ENCODE measurements at regions of chr22 and their contacts with region 1.

Region 1: DNA sequence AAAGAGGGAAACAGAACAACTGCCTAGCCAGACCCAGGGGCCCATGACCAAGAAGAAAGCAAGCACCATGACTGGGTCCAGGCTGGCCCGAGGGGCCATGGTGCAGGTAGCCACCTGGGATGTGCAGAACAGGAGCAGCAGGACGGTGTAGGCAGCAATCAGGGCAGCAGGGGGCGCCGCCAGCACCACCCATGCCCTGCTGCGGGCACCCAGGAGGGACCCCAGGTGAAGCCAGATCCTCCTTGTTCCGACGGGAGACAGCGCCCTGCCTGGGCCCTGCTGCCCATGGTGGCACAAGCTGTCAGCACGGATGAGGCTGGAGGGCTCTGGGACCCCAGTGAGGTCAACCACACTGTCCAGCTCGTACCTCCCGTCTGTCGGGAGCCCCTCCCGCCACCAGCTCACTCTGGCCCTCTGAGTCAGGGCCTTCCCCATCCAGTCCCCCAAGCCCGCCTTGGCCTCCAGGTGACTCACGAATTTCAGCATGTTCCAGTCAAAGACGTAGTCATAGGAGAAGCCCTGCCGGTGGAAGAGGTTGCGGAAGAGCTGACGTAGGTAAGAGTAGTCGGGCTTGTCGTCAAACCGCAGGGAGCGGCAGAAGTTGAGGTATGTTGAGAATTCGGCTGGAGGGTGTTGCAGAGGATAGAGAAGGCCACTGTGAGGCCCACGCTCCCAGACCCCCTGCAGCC is 18.8 kb downstream of the CSNK1E start:
- DNase-seq: peak; percentile 97 to 100
- H3K4me3 ChIP-seq: peak overlapping the region; percentile 27; the same call in 1 of the 2 replicates
- H3K27ac ChIP-seq: peak overlapping the region; percentile 97
- H3K4me1 ChIP-seq: peaks cover 77% of the 10 kb centered on the region
- H3K27me3 ChIP-seq: no peaks in the 10 kb centered on the region
- CTCF ChIP-seq: peak; percentile 92

Region 2: GRCh38 chr22:37832022-37832857 is 466.2 kb before region 1 on chr22:
- CTCF ChIA-PET with region 1: no interaction called
- POLR2A ChIA-PET with region 1: no interaction called
- intact Hi-C with region 1: no loop called
- DNase-seq: no peak
- H3K4me3 ChIP-seq: no peak overlapping the region
- H3K27ac ChIP-seq: no peak overlapping the region
- H3K4me1 ChIP-seq: no peaks in the 10 kb centered on the region
- H3K27me3 ChIP-seq: no peaks in the 10 kb centered on the region
- CTCF ChIP-seq: no peak

Region 3: DNA sequence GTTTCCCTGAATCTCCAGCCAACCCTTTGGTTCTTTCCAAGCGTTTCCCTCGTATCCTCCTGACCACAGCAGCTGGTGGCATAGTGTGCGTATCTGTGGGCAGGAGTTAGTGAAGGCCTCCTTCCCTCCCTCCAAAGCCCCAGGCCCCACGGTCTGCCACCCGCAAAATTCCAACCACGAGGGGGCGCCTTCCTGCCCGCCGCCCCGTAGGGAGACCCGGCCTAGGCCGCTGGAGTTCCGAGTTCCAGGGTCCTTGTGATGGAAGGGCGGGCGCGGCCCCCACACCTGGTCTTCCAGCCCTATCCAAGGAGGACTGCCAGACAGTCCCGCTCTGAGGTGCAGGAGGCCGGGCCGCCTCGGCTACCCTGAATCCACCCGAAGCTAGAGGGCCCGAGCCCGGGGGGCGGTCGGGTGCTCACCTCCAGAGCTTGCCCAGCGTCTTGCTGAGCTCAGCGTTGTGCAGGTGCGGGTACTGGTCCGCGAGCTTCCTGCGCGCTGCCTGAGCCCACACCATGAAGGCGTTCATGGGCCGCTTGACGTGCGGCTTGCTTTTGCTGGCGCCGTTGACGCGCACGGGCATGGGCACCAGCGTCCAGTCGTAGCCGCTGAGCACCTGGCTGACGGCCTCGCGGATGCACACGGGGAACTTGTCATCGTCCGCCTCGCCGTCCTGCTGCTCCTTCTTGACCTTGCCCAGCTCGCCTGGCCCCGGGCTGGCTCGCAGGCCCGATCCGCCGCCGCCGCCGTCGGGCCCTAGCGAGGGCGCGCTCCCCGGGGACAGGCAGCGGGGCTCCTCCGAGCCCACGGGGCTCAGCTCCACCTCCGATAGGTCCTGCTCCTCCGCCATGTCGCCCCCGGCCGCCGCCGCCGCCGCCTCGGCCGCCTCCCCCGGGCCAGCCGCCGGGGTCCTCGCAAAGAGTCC is 315.3 kb before region 1 on chr22:
- CTCF ChIA-PET with region 1: no interaction called
- POLR2A ChIA-PET with region 1: no interaction called
- intact Hi-C with region 1: no loop called
- DNase-seq: no peak
- H3K4me3 ChIP-seq: no peak overlapping the region
- H3K27ac ChIP-seq: no peak overlapping the region
- H3K4me1 ChIP-seq: no peaks in the 10 kb centered on the region
- H3K27me3 ChIP-seq: no peaks in the 10 kb centered on the region
- CTCF ChIP-seq: no peak

Region 4: DNA sequence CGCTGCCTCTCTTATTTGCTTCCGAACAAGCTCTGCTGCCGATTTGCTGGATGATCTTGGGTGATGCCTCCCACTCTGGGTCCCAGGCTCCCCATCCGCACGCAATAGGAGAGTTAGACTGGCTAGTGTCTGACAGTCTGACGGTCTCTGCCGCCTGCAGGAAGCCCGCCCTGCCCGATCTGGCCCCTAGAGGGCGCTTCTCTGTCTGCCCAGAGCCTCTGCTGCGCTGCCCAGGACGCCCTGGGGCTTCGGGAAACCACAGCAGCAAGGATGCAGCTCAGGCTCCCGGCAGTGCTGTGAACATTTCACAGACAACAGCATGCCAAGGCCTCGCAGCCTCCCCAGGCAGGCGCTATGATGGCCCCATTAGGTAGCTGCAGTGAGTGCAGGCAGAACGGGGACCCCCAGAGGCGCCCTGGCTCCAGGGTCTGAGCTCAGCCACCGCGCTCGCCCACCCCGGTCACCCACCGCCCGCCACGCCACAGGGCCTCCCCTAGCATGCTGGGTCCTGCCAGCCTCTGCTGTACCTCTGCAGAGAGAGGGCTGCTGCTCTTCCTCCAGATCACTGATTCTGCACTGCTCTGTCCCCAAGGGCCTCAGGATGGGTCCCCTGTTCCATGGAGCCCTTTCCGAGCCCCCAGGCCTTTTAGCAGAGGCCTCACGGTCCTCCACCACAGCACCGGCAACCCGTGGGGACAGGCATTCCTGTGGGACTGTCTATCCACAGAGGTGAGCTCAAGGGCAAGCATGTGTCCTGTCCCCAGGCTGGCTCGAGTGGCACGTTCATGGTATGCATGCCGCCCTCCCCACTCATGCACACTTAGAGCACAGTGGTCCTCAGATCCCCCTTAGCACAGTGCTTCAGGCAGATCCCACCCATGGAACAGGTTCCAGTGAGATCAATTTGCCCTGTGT is 183.7 kb before region 1 on chr22:
- CTCF ChIA-PET with region 1: no interaction called
- POLR2A ChIA-PET with region 1: no interaction called
- intact Hi-C with region 1: loop called (anchors 5 kb)
- DNase-seq: peak; percentile 69 to 90
- H3K4me3 ChIP-seq: no peak overlapping the region
- H3K27ac ChIP-seq: no peak overlapping the region
- H3K4me1 ChIP-seq: peaks cover 14% of the 10 kb centered on the region
- H3K27me3 ChIP-seq: no peaks in the 10 kb centered on the region
- CTCF ChIP-seq: peak; percentile 99

Region 5: DNA sequence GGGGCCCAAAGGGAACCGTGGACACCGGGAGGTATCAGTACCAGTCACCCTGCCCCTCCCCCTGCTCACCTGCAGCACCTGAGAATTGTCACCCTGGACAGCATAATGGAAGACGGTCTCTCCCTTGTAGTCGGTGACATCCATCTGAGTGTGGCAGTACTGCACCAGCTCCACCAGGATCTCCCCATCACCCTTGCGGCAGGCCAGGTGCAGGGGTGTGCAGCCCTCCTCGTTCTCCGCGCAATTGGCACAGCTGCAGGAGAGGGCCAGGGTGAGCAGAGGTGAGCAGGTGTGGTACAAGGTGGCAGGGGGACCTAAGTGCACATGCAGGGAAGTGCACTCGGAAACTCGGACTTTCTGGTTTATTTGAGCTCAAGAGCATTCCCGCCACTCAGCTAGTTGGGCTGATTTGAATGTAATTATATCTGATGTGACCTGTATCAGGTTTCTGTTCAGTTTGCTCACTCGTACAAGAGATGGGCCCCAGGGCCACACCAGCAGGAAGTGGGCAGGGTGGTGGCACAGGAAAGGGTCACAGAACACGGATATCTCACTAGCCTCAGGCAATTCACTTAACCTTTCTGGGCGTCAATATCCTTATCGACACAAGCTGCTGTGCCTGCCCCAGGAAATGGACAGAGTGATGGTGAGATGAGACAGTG is 155.3 kb before region 1 on chr22:
- CTCF ChIA-PET with region 1: no interaction called
- POLR2A ChIA-PET with region 1: no interaction called
- intact Hi-C with region 1: loop called (anchors 10 kb)
- DNase-seq: peak; percentile 88 to 98
- H3K4me3 ChIP-seq: no peak overlapping the region
- H3K27ac ChIP-seq: peak overlapping the region; percentile 82
- H3K4me1 ChIP-seq: peaks cover 57% of the 10 kb centered on the region
- H3K27me3 ChIP-seq: no peaks in the 10 kb centered on the region
- CTCF ChIP-seq: 0 out of 2 replicates have a peak, but pooled peaks have one; percentile 26

Region 6: DNA sequence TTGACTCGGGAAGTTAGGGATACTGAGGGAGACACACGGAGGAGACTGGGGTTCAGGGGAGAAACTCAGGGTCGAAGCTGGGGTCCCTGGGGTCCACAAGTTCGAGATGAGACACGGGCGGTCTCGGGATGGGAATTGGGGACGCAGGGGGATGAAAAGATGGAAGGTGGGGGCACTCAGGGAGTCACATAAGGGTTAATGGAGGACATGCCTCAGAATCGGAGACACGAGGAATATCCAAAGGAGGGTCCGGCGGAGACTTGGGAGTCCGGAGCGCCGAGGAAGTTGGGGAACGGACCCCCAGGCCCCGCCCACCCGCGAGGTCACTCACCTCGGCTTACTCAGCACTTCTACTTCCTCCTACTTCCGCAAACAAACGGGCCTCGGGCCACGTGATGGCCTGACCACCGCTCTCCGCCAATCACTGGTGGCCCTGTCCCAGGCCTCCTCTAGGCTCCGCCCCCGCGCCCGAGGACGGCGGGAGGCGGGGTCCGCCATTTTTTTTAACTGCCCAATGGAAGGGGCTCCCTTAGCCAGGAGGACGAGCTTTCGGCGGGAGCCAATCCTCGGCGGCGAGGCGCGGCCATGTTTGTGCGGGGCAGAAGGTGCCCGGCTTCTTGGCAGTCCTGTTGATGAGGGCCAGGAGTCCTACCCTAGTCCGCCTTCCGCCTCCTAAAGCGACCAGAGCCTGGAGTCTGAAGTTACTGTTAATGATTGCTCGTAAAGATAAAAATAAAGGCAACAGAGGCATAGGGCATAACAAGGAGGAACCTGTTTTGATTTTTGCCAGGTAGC is 116.8 kb before region 1 on chr22 and contains the start of gene PLA2G6:
- CTCF ChIA-PET with region 1: no interaction called
- POLR2A ChIA-PET with region 1: no interaction called
- intact Hi-C with region 1: loop called (anchors 5 kb)
- DNase-seq: peak; percentile 99 to 100
- H3K4me3 ChIP-seq: peak within 1 kb of the TSS; percentile 66
- H3K27ac ChIP-seq: peak within 1 kb of the TSS; percentile 98
- H3K4me1 ChIP-seq: peaks cover 78% of the 10 kb centered on the region
- H3K27me3 ChIP-seq: no peaks in the 10 kb centered on the region
- CTCF ChIP-seq: no peak
- total RNA-seq, gene PLA2G6: 39.8 and 45.6 TPM in 2 replicates

Region 7: GRCh38 chr22:38214256-38215056 is 84.0 kb before region 1 on chr22:
- CTCF ChIA-PET with region 1: no interaction called
- POLR2A ChIA-PET with region 1: no interaction called
- intact Hi-C with region 1: loop called (anchors 2 kb)
- DNase-seq: no peak
- H3K4me3 ChIP-seq: no peak overlapping the region
- H3K27ac ChIP-seq: no peak overlapping the region
- H3K4me1 ChIP-seq: peaks cover 38% of the 10 kb centered on the region
- H3K27me3 ChIP-seq: no peaks in the 10 kb centered on the region
- CTCF ChIP-seq: no peak

Region 8: DNA sequence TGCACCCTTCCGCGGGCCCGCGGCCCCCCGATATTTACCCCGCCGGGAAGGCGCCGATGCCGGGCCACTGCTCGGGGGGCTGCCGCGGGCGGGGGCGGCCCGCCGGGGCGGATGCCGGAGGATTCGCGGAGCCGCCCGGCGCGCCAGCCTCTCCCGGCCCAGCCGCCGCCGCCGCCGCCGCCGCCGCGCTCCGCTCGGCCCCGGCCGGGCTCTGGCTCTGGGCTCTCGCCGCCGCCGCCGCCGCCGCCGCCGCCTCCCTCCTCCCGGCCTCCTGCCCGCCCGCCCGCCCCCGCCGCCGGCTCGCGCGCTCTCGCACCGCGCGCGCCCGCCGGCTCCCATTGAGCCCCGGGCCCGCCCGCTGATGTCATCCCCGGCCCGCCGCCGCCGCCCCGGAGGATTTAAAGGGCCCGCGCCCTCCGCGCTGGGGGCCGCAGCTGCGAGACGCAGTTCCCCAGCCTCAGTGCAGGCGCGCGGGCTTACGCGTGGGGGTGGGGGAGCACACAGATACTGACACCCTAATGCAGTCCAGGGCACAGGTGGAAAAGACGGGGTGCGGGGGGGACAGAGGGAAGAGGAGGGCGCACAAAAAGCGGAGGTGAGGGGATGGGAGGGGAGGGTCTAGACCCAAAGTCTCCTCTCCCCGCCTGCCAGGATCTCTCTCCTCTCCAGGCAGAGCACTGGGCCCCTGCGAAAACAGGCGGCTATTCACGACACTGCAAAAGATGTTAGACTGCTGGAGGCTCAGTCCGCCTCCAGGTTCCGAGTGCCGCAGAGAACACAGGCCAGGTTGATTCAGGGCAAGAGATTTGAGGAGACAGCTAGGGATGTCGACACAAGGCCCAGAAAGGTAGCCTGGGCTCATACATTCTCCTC is 18.9 kb after region 1 on chr22 and contains the start of gene CSNK1E:
- CTCF ChIA-PET with region 1: no interaction called
- POLR2A ChIA-PET with region 1: interaction called, 3 read pairs
- intact Hi-C with region 1: loop called (anchors 1 kb)
- DNase-seq: peak; percentile 45 to 81
- H3K4me3 ChIP-seq: peak within 1 kb of the TSS; percentile 85
- H3K27ac ChIP-seq: peak within 1 kb of the TSS; percentile 90
- H3K4me1 ChIP-seq: peaks cover 45% of the 10 kb centered on the region
- H3K27me3 ChIP-seq: no peaks in the 10 kb centered on the region
- CTCF ChIP-seq: no peak
- total RNA-seq, gene CSNK1E: 331 and 348 TPM in 2 replicates

Region 9: GRCh38 chr22:38327805-38328204 is 29.3 kb after region 1 on chr22:
- CTCF ChIA-PET with region 1: no interaction called
- POLR2A ChIA-PET with region 1: no interaction called
- intact Hi-C with region 1: no loop called
- DNase-seq: peak; percentile 50 to 55
- H3K4me3 ChIP-seq: no peak overlapping the region
- H3K27ac ChIP-seq: peak overlapping the region; percentile 38; the same call in 1 of the 2 replicates
- H3K4me1 ChIP-seq: peaks cover 13% of the 10 kb centered on the region
- H3K27me3 ChIP-seq: no peaks in the 10 kb centered on the region
- CTCF ChIP-seq: no peak

Region 10: GRCh38 chr22:38353142-38353629 is 54.7 kb after region 1 on chr22:
- CTCF ChIA-PET with region 1: no interaction called
- POLR2A ChIA-PET with region 1: no interaction called
- intact Hi-C with region 1: loop called (anchors 5 kb)
- DNase-seq: peak; percentile 42 to 85
- H3K4me3 ChIP-seq: no peak overlapping the region
- H3K27ac ChIP-seq: no peak overlapping the region
- H3K4me1 ChIP-seq: peaks cover 8% of the 10 kb centered on the region
- H3K27me3 ChIP-seq: no peaks in the 10 kb centered on the region
- CTCF ChIP-seq: peak; percentile 100

Measured in PC-9 (cell line).